PC-9 (cell line): ENCODE measurements at regions of chr11 and their contacts with region 1.

Region 1: DNA sequence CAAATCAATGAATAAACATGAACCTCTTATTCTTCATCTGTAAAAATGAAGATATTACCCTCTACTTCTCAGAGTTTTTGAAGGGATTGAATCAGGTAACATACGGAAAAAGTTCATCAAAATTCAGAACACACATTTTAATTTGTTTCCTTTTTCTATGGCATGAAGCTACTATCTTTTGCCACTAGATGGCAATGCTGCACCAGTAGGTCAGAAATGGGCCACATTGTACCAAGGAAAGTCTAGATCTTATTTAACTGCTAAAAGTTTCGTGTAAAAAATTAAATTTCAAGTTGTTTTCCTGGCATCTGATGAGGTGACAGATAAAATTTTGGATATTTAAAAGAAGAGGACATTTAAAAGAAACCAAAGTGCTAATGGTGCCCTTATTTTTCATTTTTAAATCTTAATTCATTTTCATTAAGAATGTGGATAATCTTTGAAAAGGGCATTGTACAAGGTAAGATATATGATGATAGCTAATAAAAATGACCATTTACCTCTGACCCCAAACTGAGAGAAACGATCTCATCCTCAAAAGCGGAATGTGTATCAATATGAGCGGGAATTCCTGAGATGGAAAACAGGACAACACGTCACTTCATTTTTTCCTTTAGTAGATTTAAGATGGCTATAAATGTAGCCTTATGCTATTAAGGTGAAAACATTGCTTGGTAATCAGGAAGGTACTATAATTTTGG is 16.1 kb downstream of the ALKBH8 start:
- DNase-seq: no peak
- H3K4me3 ChIP-seq: no peak overlapping the region
- H3K27ac ChIP-seq: no peak overlapping the region
- H3K4me1 ChIP-seq: peaks cover 10% of the 10 kb centered on the region
- H3K27me3 ChIP-seq: no peaks in the 10 kb centered on the region
- CTCF ChIP-seq: peak; percentile 92

Region 2: GRCh38 chr11:107573438-107573837 is 24.0 kb after region 1 on chr11:
- CTCF ChIA-PET with region 1: no interaction called
- POLR2A ChIA-PET with region 1: no interaction called
- intact Hi-C with region 1: loop called (anchors 1 kb)
- DNase-seq: no peak
- H3K4me3 ChIP-seq: no peak overlapping the region
- H3K27ac ChIP-seq: no peak overlapping the region
- H3K4me1 ChIP-seq: peaks cover 4% of the 10 kb centered on the region; the same call in 1 of the 2 replicates
- H3K27me3 ChIP-seq: no peaks in the 10 kb centered on the region
- CTCF ChIP-seq: no peak